ENCODE measurements at regions of chr18 and their contacts with region 1.

Region 1: DNA sequence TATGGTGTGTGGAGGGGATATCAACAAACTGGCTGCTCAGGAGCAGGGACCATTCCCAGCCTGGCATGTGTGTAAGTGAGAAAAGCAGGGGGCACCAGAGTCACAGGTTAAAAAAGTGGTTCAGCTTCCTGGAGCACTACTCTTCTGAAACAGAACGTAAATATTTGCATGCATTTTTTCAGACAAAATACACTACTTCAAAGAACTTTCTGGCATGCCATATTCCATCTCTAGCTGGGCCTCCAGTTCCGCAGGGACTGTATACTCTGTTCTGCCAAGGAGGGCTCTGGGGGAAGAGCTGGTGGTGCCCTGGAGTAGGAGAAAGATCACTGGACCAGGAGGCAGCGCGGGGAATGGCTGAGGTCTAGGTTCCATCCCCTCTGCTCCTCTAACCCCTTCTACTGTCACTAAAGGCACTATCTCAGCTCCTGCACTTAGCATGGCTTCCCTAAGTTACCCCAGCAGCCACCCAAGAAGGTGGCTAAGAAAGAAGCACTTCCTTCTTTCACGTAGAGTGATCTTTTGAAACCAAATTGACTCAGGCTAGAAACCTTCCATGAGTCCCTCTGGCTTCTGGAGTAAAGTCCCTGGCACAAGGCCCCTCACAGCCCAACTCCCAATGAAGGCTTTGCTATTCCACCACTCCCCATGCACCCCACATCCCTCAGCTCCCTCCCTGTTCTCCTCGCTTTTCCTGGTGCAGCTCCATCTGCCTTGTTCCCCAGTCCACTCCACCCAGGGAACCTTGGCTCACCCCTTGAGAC is 57.6 kb upstream of the CABLES1 start:
- DNase-seq: peak; percentile 37
- H3K4me3 Mint-ChIP-seq: no peak overlapping the region
- H3K27ac Mint-ChIP-seq: no peak overlapping the region
- H3K4me1 Mint-ChIP-seq: peaks cover 28% of the 10 kb centered on the region
- H3K27me3 Mint-ChIP-seq: no peaks in the 10 kb centered on the region

Region 2: GRCh38 chr18:23377669-23378301 is 300.1 kb after region 1 on chr18:
- CTCF ChIA-PET with region 1: interaction called, 3 read pairs
- intact Hi-C with region 1: loop called (anchors 1 kb)
- DNase-seq: peak; percentile 20
- H3K4me3 Mint-ChIP-seq: no peak overlapping the region
- H3K27ac Mint-ChIP-seq: peak overlapping the region; percentile 53
- H3K4me1 Mint-ChIP-seq: peaks cover 16% of the 10 kb centered on the region
- H3K27me3 Mint-ChIP-seq: no peaks in the 10 kb centered on the region

Region 3: DNA sequence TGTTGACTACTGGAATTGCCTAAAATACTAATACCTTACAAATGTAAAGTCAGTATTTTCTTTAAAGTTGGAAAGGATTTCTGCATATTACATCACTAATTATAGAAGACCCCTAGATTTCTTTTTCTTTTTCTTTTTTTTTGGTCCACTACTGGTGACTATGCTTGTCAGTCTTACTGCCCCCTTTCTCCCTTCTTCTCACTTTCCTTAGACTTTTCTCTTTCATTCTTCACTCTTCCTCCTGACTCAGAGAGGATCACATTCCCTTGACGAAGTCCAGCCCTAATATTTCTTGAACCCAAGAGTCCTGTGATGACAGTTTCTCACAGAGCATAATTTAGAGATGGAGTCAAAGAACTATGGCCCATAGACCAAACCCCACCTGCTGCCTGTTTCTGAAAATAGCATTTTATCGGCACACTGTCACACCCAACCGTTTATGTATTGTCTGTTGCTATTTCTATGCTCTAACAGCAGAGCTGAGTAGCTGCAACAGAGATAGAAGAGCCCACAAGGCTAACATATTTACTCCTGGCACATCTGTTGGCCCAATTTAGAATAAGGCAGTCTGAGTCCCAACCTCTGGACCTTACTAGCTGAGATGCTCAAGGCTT is 334.8 kb after region 1 on chr18:
- CTCF ChIA-PET with region 1: interaction called, 3 read pairs
- intact Hi-C with region 1: loop called (anchors 5 kb)
- DNase-seq: no peak
- H3K4me3 Mint-ChIP-seq: no peak overlapping the region
- H3K27ac Mint-ChIP-seq: no peak overlapping the region
- H3K4me1 Mint-ChIP-seq: no peaks in the 10 kb centered on the region
- H3K27me3 Mint-ChIP-seq: no peaks in the 10 kb centered on the region

Region 4: GRCh38 chr18:23650968-23651927 is 573.6 kb after region 1 on chr18:
- CTCF ChIA-PET with region 1: no interaction called
- intact Hi-C with region 1: no loop called
- DNase-seq: no peak
- H3K4me3 Mint-ChIP-seq: no peak overlapping the region
- H3K27ac Mint-ChIP-seq: no peak overlapping the region
- H3K4me1 Mint-ChIP-seq: peaks cover 3% of the 10 kb centered on the region
- H3K27me3 Mint-ChIP-seq: no peaks in the 10 kb centered on the region

Region 5: GRCh38 chr18:24432618-24433017 is 1354.9 kb after region 1 on chr18:
- CTCF ChIA-PET with region 1: no interaction called
- intact Hi-C with region 1: loop called (anchors 5 kb)
- DNase-seq: no peak
- H3K4me3 Mint-ChIP-seq: no peak overlapping the region
- H3K27ac Mint-ChIP-seq: no peak overlapping the region
- H3K4me1 Mint-ChIP-seq: peaks cover 10% of the 10 kb centered on the region
- H3K27me3 Mint-ChIP-seq: no peaks in the 10 kb centered on the region